Endothelial cell of umbilical vein (primary cell): ENCODE measurements at regions of chr15 and their contacts with region 1.

Region 1: DNA sequence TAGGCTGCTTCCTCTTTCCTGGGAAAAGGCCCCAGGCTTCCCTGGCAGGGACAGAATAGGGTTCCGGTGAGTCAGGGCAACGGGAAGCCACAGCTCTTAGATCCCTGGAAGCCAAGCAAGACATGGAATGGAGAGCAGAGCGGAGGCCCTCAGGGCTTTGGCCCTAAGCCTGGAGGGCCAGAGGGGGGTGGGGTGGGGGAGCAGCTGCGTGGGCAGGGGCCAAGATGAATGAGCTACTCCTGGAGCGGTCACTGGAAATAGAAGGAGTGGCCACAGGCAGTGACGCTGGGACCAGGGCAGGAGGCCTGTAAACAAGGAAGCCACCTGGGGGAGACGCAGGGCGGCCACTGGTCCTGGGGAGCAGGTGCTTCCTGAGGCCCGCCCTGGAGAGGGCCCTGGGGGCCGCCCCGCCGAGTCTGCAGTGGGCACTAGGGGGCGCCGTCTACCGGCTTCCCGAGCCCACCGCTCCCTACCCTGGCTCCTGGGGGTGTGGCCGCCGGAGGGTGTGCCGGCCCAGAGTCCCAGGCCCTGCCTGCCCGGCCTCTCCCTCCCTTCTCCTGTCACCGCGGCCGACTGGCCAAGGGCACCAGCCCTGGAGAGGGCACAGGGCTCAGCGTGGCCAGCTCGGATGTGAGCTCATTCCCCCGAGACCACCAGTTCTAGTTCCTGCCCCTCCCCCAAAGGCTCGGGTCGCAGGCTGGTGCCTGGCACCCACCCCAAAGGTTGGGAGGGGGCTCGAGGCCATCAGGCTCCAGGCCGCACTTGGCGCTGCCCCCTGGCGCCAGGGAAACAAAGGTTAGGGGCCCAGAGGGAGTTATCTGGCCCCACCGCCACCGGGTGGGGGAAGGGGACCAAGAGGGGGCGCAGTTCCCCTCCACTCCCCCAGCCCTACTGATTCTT is 12.1 kb downstream of the VPS18 start:
- DNase-seq: peak; percentile 98
- H3K4me3 ChIP-seq: peak overlapping the region in 2 of 3 experiments; percentile 9 to 13
- H3K27ac ChIP-seq: peak overlapping the region; percentile 88
- H3K4me1 ChIP-seq: peaks cover 30% of the 10 kb centered on the region
- H3K27me3 ChIP-seq: no peaks in the 10 kb centered on the region
- CTCF ChIP-seq: peak; percentile 89 to 99
- POLR2A ChIP-seq: peak; percentile 67

Region 2: GRCh38 chr15:40807888-40808475 is 98.4 kb before region 1 on chr15:
- CTCF ChIA-PET with region 1: no interaction called
- POLR2A ChIA-PET with region 1: no interaction called
- dilution Hi-C with region 1: no loop called
- intact Hi-C with region 1: no loop called
- DNase-seq: no peak
- H3K4me3 ChIP-seq: peak overlapping the region; percentile 43 to 67 (median 64)
- H3K27ac ChIP-seq: no peak overlapping the region
- H3K4me1 ChIP-seq: peaks cover 14% of the 10 kb centered on the region
- H3K27me3 ChIP-seq: no peaks in the 10 kb centered on the region
- CTCF ChIP-seq: no peak
- POLR2A ChIP-seq: no peak

Region 3: DNA sequence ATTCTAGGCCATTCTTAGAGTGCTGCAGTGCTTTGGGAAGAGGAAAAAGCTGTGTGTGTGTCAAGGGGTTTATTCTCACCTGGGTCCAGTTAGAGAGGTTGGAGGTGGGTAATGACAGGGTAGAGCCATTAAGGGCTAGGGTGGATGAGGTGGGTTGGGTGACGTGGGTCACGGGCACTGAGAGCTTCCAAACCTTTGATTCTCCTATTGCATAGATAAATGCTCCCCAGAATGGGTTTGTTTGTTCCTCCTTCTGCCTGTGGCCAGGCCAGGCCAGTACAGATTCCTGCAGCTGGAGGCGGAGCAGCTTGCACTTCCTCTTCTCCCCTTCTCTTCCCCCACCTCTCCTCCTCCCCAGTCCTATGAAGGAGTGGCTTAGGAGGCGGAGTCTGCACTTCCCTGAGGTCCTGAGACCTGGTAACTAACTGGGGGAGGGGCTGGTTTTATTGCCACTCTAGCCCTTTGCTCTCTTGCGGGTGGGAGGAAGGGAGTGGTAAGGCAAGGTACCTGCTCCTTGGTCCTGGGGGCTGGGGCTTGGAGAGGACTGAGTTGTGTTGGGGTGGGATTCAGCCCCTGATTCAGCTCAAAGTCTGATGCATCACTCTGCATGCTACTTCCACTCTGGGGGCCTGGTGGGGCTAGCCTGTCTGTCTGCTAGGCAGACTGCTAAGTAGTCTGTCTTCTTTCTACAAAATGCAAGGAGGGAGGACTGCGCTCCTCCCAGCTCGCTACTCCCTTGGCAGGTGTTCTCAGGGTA is 59.0 kb before region 1 on chr15:
- CTCF ChIA-PET with region 1: no interaction called
- POLR2A ChIA-PET with region 1: no interaction called
- dilution Hi-C with region 1: no loop called
- intact Hi-C with region 1: no loop called
- DNase-seq: no peak
- H3K4me3 ChIP-seq: no peak overlapping the region
- H3K27ac ChIP-seq: no peak overlapping the region
- H3K4me1 ChIP-seq: peaks cover 5% of the 10 kb centered on the region
- H3K27me3 ChIP-seq: peaks cover 7 to 11% of the 10 kb centered on the region in 2 experiments
- CTCF ChIP-seq: no peak
- POLR2A ChIP-seq: no peak

Region 4: DNA sequence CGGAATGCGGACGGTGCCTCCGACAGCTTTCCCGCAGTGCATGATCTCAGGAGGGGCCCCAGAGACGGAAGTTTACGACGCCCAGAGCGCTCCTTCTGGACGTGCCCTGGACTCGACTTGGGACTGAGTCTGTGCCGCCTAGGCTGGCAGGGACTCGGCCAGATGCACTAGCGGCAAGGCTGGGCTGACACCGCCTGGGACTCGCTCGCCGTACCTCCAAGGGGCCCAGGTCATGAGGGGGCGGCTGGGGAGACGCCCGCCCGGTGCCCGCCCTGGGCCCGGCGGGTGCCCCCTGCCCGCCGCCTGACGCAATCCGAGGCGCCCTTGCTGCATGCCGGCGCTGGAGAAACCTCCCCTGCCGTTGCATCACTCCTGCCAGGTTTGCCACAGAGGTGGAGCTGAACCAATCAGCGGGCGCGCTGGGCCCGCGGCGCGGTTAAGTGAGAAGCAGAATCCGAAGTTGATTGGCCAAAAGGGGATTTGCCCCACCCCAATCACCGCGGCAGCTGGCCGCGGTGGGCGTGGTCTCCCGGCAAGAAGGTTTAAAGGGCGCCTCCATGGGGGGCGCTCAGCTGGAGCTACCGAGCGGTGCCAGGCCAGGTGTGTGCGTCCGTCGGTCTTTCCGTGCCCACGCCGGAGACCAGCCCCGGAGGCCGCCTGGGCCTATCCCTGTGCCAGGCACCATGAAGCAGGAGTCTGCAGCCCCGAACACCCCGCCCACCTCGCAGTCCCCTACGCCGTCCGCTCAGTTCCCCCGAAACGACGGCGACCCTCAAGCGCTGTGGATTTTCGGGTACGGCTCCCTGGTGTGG is 46.8 kb after region 1 on chr15 and contains the start of gene CHAC1:
- CTCF ChIA-PET with region 1: interaction called, 19 read pairs
- POLR2A ChIA-PET with region 1: interaction called, 5 read pairs
- dilution Hi-C with region 1: no loop called
- intact Hi-C with region 1: loop called (anchors 1 kb)
- DNase-seq: peak; percentile 98
- H3K4me3 ChIP-seq: peak within 1 kb of the TSS; percentile 32 to 90 (median 37)
- H3K27ac ChIP-seq: peak within 1 kb of the TSS; percentile 61
- H3K4me1 ChIP-seq: peaks cover 10% of the 10 kb centered on the region
- H3K27me3 ChIP-seq: no peaks in the 10 kb centered on the region
- CTCF ChIP-seq: peak in 1 of 2 donors; percentile 9
- POLR2A ChIP-seq: peak; percentile 77
- total RNA-seq, gene CHAC1: 4.6 and 5.6 TPM in 2 replicates

Region 5: GRCh38 chr15:41022487-41023090 is 116.2 kb after region 1 on chr15:
- CTCF ChIA-PET with region 1: interaction called, 405 read pairs
- POLR2A ChIA-PET with region 1: interaction called, 7 read pairs
- dilution Hi-C with region 1: loop called (anchors 10 kb)
- intact Hi-C with region 1: loop called (anchors 1 kb)
- DNase-seq: peak; percentile 80
- H3K4me3 ChIP-seq: no peak overlapping the region
- H3K27ac ChIP-seq: no peak overlapping the region
- H3K4me1 ChIP-seq: peaks cover 32% of the 10 kb centered on the region
- H3K27me3 ChIP-seq: no peaks in the 10 kb centered on the region
- CTCF ChIP-seq: peak; percentile 67 to 73
- POLR2A ChIP-seq: no peak

Region 6: DNA sequence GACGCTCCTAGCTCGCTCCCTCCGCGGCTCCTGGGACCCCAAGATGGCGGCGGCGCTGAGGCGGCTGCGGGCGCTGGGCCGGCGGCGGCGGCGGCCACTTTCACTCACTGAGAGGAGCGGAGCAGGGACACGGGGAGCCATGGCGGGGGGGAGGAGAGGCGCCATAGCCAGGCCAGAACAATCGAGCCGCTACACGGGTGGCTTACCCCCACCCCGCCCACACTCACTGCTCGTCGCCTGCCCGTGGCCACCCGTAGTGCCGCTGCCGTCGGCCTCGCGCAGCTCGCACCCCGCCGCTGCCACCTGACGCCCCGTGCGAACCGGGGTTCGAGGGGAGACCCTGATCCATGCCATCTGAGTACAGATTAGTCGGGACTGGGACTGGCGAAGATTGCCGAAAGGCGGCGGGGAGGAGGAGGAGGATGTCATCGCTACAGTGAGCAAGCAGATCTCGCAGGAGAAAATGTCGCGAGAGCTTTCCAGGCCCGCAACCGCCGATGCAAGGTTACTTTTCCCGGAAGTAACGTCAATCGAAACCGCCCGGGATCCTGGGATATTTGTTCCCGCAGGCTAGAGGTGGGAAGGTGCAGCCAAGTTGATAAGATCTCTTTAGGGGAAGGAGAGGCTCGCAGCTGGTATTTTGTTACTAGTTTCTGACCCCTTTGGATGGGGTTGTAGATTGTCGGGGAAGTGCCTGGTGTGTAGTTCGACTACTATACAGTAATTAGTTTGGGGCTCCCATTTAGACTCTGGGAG is 210.0 kb after region 1 on chr15 and contains the start of gene INO80:
- CTCF ChIA-PET with region 1: interaction called, 4 read pairs
- POLR2A ChIA-PET with region 1: interaction called, 3 read pairs
- dilution Hi-C with region 1: no loop called
- intact Hi-C with region 1: loop called (anchors 1 kb)
- DNase-seq: peak; percentile 97
- H3K4me3 ChIP-seq: peak within 1 kb of the TSS; percentile 89 to 95 (median 90)
- H3K27ac ChIP-seq: peak within 1 kb of the TSS; percentile 96
- H3K4me1 ChIP-seq: peaks cover 11% of the 10 kb centered on the region
- H3K27me3 ChIP-seq: peaks cover 0 to 3% of the 10 kb centered on the region in 2 experiments
- CTCF ChIP-seq: no peak
- POLR2A ChIP-seq: peak; percentile 97
- total RNA-seq, gene INO80: 22.9 and 29.1 TPM in 2 replicates

Region 7: GRCh38 chr15:41230650-41231533 is 324.6 kb after region 1 on chr15 and contains the starts of genes CHP1 and EXD1:
- CTCF ChIA-PET with region 1: no interaction called
- POLR2A ChIA-PET with region 1: no interaction called
- dilution Hi-C with region 1: no loop called
- intact Hi-C with region 1: loop called (anchors 1 kb)
- DNase-seq: peak; percentile 98
- H3K4me3 ChIP-seq: peak within 1 kb of the TSS; percentile 73 to 96 (median 87)
- H3K27ac ChIP-seq: peak within 1 kb of the TSS; percentile 71
- H3K4me1 ChIP-seq: peaks cover 15% of the 10 kb centered on the region
- H3K27me3 ChIP-seq: no peaks in the 10 kb centered on the region
- CTCF ChIP-seq: peak; percentile 93 to 98
- POLR2A ChIP-seq: peak; percentile 67
- total RNA-seq, gene CHP1: 84.4 and 96.2 TPM in 2 replicates
- total RNA-seq, gene EXD1: not detected in 2 replicates

Region 8: GRCh38 chr15:41258706-41259471 is 352.5 kb after region 1 on chr15:
- CTCF ChIA-PET with region 1: no interaction called
- POLR2A ChIA-PET with region 1: no interaction called
- dilution Hi-C with region 1: no loop called
- intact Hi-C with region 1: no loop called
- DNase-seq: no peak
- H3K4me3 ChIP-seq: no peak overlapping the region
- H3K27ac ChIP-seq: no peak overlapping the region
- H3K4me1 ChIP-seq: peaks cover 6% of the 10 kb centered on the region
- H3K27me3 ChIP-seq: no peaks in the 10 kb centered on the region
- CTCF ChIP-seq: no peak
- POLR2A ChIP-seq: no peak